SK-N-SH (cell line): ENCODE measurements at regions of chr7 and their contacts with region 1.

Region 1: GRCh38 chr7:97499204-97499603 is 232.7 kb upstream of the TAC1 start:
- DNase-seq: peak; percentile 55
- H3K4me3 ChIP-seq: no peak overlapping the region
- H3K27ac ChIP-seq: no peak overlapping the region
- H3K4me1 ChIP-seq: no peaks in the 10 kb centered on the region
- H3K27me3 ChIP-seq: no peaks in the 10 kb centered on the region; the same call in 1 of the 2 replicates
- CTCF ChIP-seq: peak; percentile 72
- EP300 ChIP-seq: no peak
- RAD21 ChIP-seq: peak; percentile 70

Region 2: GRCh38 chr7:97513326-97513725 is 14.1 kb after region 1 on chr7:
- CTCF ChIA-PET with region 1: interaction called, 12 read pairs
- POLR2A ChIA-PET with region 1: no interaction called
- DNase-seq: no peak
- H3K4me3 ChIP-seq: no peak overlapping the region
- H3K27ac ChIP-seq: no peak overlapping the region
- H3K4me1 ChIP-seq: no peaks in the 10 kb centered on the region
- H3K27me3 ChIP-seq: no peaks in the 10 kb centered on the region
- CTCF ChIP-seq: no peak
- EP300 ChIP-seq: no peak
- RAD21 ChIP-seq: no peak

Region 3: GRCh38 chr7:98014352-98014751 is 515.1 kb after region 1 on chr7:
- CTCF ChIA-PET with region 1: interaction called, 12 read pairs
- POLR2A ChIA-PET with region 1: no interaction called
- DNase-seq: no peak
- H3K4me3 ChIP-seq: no peak overlapping the region
- H3K27ac ChIP-seq: no peak overlapping the region
- H3K4me1 ChIP-seq: no peaks in the 10 kb centered on the region
- H3K27me3 ChIP-seq: peaks cover 11% of the 10 kb centered on the region; the same call in 1 of the 2 replicates
- CTCF ChIP-seq: no peak
- EP300 ChIP-seq: no peak
- RAD21 ChIP-seq: peak; percentile 26; the same call in 1 of the 2 replicates